Activated T-helper 2 cell treated with anti-CD3 and anti-CD28 coated beads, Interferon-gamma antibody, Interleukin-2, Interleukin-4, amounts not matched to agents 10 μg/mL and 5 μg/mL and 100 μg/mL, durations not matched to agents 14 hours and 24 hours and 36 hours (primary cell): ENCODE measurements at regions of chr15 and their contacts with region 1.

Region 1: GRCh38 chr15:39920510-39921273 is 626 bp upstream of the GPR176 start:
- DNase-seq: peak; percentile 65
- H3K4me3 Mint-ChIP-seq: peak overlapping the region; percentile 82
- H3K27ac Mint-ChIP-seq: peak overlapping the region; percentile 73
- H3K4me1 Mint-ChIP-seq: peaks cover 30% of the 10 kb centered on the region
- H3K27me3 Mint-ChIP-seq: peaks cover 36% of the 10 kb centered on the region

Region 2: GRCh38 chr15:39908186-39908585 is 12.5 kb before region 1 on chr15:
- intact Hi-C with region 1: loop called (anchors 2 kb)
- DNase-seq: no peak
- H3K4me3 Mint-ChIP-seq: no peak overlapping the region
- H3K27ac Mint-ChIP-seq: no peak overlapping the region
- H3K4me1 Mint-ChIP-seq: peaks cover 2% of the 10 kb centered on the region
- H3K27me3 Mint-ChIP-seq: peaks cover 9% of the 10 kb centered on the region

Region 3: DNA sequence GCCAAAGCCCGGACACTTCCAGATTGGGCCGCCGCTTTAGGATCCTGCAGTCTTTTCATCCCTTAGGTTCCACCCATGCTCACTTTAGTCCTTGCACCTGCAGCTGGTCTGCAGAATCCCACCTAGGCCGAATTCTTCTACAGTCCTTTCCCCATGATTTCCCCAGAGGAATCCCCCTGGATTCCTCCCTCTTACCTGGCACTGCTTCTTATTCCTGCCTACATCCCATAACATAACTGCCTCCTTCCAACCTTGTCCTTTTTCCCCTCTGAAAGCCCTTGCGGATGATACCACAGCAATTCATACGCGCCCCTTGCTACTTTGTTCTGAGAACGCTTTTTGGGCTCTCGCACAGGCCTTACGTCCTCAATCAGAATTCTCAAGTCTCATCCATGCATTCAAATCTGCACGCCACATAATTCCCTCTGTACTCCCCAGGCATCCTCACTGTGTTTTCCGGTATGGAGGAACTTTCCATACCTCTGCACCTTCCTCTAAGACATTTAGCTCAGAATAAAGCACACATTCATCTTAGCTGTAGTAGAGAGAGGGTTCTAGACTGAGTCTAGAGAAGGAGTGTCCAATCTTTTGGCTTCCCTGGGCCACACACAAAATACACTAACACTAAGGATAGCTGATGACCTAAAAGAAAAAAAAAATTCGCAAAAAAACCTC is 13.8 kb after region 1 on chr15:
- intact Hi-C with region 1: loop called (anchors 2 kb)
- DNase-seq: no peak
- H3K4me3 Mint-ChIP-seq: peak overlapping the region; percentile 90
- H3K27ac Mint-ChIP-seq: peak overlapping the region; percentile 67
- H3K4me1 Mint-ChIP-seq: peaks cover 36% of the 10 kb centered on the region
- H3K27me3 Mint-ChIP-seq: peaks cover 1% of the 10 kb centered on the region

Region 4: DNA sequence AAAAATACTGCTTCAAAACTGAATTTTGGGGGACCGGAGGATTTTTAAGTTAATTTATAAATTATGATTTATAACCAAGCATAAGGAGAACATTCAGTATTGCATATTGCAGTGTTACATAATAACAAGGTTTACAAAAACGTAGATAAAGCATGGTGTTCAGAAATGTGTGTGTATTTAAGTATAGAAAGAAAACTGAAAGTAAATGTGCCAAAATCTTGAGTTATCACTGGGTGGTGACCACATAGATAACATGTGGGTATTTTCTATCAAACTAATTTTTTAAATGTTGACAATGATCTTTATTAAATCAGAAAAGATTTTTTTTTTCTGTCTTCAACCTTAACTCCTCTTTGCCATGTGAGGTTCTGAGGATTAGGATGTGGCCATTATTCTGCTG is 45.8 kb after region 1 on chr15:
- intact Hi-C with region 1: loop called (anchors 5 kb)
- DNase-seq: no peak
- H3K4me3 Mint-ChIP-seq: no peak overlapping the region
- H3K27ac Mint-ChIP-seq: no peak overlapping the region
- H3K4me1 Mint-ChIP-seq: peaks cover 51% of the 10 kb centered on the region
- H3K27me3 Mint-ChIP-seq: no peaks in the 10 kb centered on the region